Breast epithelium (tissue), 4 donors: ENCODE measurements at regions of chr2 and their contacts with region 1.

Region 1: GRCh38 chr2:175684457-175684856 is 317.6 kb downstream of the LNPK start:
- DNase-seq: no peak
- H3K4me3 ChIP-seq: no peak overlapping the region
- H3K27ac ChIP-seq: no peak overlapping the region
- H3K4me1 ChIP-seq: no peaks in the 10 kb centered on the region
- H3K27me3 ChIP-seq: peaks cover 0 to 14% of the 10 kb centered on the region in 2 donors
- CTCF ChIP-seq: no peak
- POLR2A ChIP-seq: no peak

Region 2: DNA sequence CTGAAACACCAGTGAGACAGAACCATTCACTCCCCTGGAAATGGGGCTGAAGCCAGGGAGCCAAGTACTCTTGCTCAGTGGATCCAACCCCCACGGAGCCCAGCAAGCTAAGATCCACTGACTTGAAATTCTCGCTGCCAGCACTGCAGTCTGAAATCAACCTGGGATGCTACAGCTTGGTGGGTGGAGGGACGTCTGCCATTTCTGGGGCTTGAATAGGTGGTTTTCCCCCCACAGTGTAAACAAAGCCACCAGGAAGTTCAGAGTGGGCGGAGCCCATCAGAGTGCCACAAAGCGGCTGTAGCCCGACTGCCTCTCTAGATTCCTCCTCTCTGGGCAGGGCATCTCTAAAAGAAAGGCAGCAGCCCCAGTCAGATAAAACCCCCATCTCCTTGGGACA is 24.8 kb after region 1 on chr2:
- intact Hi-C with region 1: no loop called
- DNase-seq: no peak
- H3K4me3 ChIP-seq: no peak overlapping the region
- H3K27ac ChIP-seq: no peak overlapping the region
- H3K4me1 ChIP-seq: no peaks in the 10 kb centered on the region
- H3K27me3 ChIP-seq: peaks cover 0 to 8% of the 10 kb centered on the region in 2 donors
- CTCF ChIP-seq: no peak
- POLR2A ChIP-seq: no peak

Region 3: DNA sequence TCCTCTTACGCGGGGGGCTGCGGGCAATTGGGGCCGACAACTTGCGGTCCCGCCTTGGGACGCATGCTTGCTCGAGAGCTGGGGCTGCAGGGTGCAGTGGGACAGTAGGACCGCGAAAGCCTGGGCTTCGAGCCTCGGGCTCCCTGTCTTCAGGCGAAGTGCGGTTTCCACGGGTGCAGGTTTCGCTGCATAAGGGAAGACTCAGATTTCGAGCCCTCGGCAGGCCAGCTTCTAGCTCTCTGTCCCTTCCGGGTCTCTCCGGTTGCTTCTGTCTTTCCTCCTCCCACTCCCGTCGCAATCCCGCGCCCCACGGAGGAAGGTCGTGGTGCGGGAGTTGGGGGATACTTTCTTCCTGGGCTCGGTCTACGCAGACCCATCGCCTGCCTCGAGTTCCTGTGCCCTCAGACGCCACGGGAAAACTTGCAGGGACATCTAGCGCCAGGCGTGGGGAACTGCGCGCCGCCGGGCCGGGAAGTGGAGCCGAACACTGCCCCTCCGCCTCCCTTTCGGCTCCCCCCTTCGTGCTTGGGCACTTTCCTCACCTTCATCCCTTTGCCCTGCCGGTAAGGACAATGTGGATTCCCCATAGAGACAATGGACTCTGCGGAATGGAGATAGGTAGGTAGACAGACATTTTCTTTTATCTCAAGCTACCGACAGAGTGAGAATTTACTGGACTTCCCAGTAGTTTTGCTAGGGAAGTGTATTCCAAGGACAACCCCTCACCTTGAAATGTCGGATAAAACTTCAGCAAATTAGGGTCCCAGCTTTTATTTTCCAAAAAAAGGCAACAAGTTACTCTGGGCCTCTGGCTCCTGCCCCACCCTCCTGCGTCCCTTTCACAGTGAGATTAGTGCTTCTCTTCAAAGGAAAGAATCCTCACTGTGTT is 403.8 kb after region 1 on chr2:
- intact Hi-C with region 1: loop called (anchors 10 kb)
- DNase-seq: no peak
- H3K4me3 ChIP-seq: peak overlapping the region in 2 of 3 donors; percentile 27 to 55
- H3K27ac ChIP-seq: no peak overlapping the region
- H3K4me1 ChIP-seq: peaks cover 4% of the 10 kb centered on the region in 2 donors
- H3K27me3 ChIP-seq: peaks cover 12 to 100% of the 10 kb centered on the region in 2 donors
- CTCF ChIP-seq: peak in 2 of 3 donors; percentile 58 to 67
- POLR2A ChIP-seq: no peak